ENCODE measurements at regions of chr3 and their contacts with region 1.

Region 1: GRCh38 chr3:57826245-57826951 is 70.3 kb downstream of the SLMAP start:
- DNase-seq: no peak
- ATAC-seq: no peak
- H3K4me3 ChIP-seq: no peak overlapping the region
- H3K27ac ChIP-seq: no peak overlapping the region
- H3K4me1 ChIP-seq: peaks cover 4 to 44% (median 33%) of the 10 kb centered on the region in 9 donors
- H3K27me3 ChIP-seq: no peaks in the 10 kb centered on the region
- CTCF ChIP-seq: peak in 6 of 9 donors; percentile 16 to 59 (median 46)

Region 2: GRCh38 chr3:57646723-57647122 is 179.7 kb before region 1 on chr3:
- intact Hi-C with region 1: loop called in 9 of 10 experiments (anchors 5 to 10 kb)
- DNase-seq: peak in 1 of 2 donors; percentile 15
- ATAC-seq: peak; percentile 76 to 94 (median 86)
- H3K4me3 ChIP-seq: no peak overlapping the region
- H3K27ac ChIP-seq: peak overlapping the region in 4 of 10 donors; percentile 13 to 56 (median 42)
- H3K4me1 ChIP-seq: peaks cover 0 to 15% (median 6%) of the 10 kb centered on the region in 9 donors
- H3K27me3 ChIP-seq: no peaks in the 10 kb centered on the region
- CTCF ChIP-seq: peak in 6 of 9 donors; percentile 34 to 59 (median 52)

Region 3: DNA sequence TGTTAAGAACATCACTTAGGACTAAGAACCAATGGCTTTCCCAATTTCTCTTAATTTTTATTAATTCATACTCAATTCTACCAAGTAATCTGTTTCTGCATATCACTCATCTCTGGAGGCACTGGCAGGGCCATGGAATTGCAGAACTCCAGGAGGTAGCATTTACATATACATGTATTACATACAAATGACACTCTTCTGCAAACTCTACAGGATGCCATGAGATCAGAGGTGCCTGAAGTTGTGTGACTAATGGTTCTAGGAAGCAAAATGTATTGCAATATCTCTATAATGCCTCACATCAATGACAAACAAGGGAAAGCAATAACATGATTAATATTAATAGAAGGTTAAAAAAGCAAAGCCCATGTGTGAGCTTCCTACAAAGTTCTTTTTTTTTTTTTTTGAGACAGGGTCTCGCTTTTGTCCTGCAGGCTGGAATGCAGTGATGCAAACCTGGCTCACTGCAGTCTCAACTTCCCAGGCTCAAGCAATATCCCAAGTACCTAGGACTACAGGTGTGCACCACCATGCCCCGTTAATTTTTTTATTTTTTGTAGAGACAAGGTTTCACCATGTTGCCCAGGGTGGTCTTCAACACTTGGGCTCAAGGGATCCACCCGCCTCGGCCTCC is 166.5 kb before region 1 on chr3:
- intact Hi-C with region 1: loop called in 1 of 10 experiments (anchors 10 kb)
- DNase-seq: no peak
- ATAC-seq: no peak
- H3K4me3 ChIP-seq: no peak overlapping the region
- H3K27ac ChIP-seq: peak overlapping the region in 4 of 10 donors; percentile 45 to 69 (median 62)
- H3K4me1 ChIP-seq: peaks cover 0 to 24% (median 14%) of the 10 kb centered on the region in 9 donors
- H3K27me3 ChIP-seq: no peaks in the 10 kb centered on the region
- CTCF ChIP-seq: no peak

Region 4: DNA sequence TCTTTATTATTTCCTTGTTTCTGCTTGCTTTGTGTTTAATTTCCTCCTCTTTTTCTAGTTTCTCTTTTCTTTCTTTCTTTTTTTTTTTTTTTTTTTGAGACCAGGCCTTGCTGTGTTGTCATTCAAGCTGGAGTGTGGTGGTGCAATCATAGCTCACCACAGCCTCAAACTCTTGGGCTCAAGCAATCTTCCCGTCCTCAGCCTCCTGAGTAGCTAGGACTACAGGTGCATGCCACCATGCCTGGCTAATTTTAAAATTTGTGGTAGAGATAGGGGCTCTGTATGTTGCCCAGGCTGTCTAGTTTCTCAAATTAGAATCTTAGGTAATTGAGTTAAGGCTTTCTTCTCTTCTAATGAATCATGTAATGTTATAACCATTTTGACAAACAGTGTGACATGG is 47.9 kb before region 1 on chr3:
- intact Hi-C with region 1: loop called in 1 of 10 experiments (anchors 10 kb)
- DNase-seq: no peak
- ATAC-seq: peak in 1 of 8 donors; percentile 44
- H3K4me3 ChIP-seq: no peak overlapping the region
- H3K27ac ChIP-seq: no peak overlapping the region
- H3K4me1 ChIP-seq: peaks cover 0 to 22% (median 14%) of the 10 kb centered on the region in 9 donors
- H3K27me3 ChIP-seq: no peaks in the 10 kb centered on the region
- CTCF ChIP-seq: no peak

Region 5: GRCh38 chr3:57852896-57853295 is 26.5 kb after region 1 on chr3:
- intact Hi-C with region 1: loop called in 1 of 10 experiments (anchors 1 kb)
- DNase-seq: no peak
- ATAC-seq: no peak
- H3K4me3 ChIP-seq: no peak overlapping the region
- H3K27ac ChIP-seq: no peak overlapping the region
- H3K4me1 ChIP-seq: no peaks in the 10 kb centered on the region
- H3K27me3 ChIP-seq: no peaks in the 10 kb centered on the region
- CTCF ChIP-seq: peak in 4 of 9 donors; percentile 28 to 44 (median 32)